ENCODE measurements at regions of chr3 and their contacts with region 1.

Region 1: DNA sequence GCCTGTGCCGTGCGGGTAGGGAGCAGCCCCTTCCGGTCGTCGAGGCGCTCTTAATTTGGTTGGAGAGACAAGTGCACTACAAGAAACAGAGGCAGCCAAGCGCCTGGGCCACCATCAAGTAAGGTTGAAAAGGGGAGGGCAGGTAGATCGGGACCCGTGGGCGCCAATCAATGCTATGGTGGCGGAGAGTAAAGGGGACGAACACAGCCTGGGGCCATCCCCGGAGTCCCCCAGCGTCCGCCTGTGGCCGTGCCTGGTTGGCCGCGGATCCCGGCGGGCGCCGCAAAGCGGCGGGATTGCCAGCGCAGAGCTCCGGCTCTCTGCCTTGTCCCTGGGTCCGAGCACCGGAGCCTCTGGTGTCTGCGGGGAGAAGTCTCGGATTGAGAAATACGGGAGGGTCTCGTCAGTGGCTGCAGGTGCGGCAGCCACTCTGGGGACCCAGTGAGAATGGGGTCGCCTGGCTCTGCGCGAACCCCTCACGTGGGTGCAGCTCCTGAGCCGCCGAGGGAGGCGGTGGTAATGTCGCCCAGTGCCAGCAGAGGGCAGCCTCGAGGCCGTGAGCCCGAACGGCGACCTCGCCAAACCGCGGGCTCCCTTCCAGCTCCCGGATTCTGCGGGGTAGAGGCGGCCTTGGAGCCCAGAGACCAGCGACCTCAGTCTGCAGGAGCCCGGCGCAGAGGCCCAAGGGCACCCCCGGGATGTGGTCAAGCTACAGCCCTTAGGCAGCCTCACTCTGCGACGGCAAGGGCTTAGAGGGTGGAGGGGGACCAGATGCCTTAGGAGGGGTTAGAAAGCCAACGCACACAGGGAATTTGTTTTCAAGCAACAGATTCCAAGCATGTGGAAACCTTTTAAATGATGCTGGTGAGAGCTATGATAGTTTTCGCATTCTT is 10.8 kb downstream of the FOXL2 start:
- DNase-seq: no peak
- H3K4me3 ChIP-seq: peak overlapping the region; percentile 44 to 55 (median 44)
- H3K27ac ChIP-seq: no peak overlapping the region
- H3K4me1 ChIP-seq: peaks cover 40 to 47% (median 45%) of the 10 kb centered on the region in 4 donors
- H3K27me3 ChIP-seq: peaks cover 17 to 68% (median 56%) of the 10 kb centered on the region in 4 donors
- CTCF ChIP-seq: peak; percentile 75 to 98 (median 90)
- EP300 ChIP-seq: no peak
- POLR2A ChIP-seq: no peak

Region 2: GRCh38 chr3:138975351-138975750 is 39.3 kb after region 1 on chr3:
- intact Hi-C with region 1: loop called (anchors 5 kb)
- DNase-seq: no peak
- H3K4me3 ChIP-seq: no peak overlapping the region
- H3K27ac ChIP-seq: no peak overlapping the region
- H3K4me1 ChIP-seq: peaks cover 0 to 6% (median 5%) of the 10 kb centered on the region in 4 donors
- H3K27me3 ChIP-seq: peaks cover 0 to 16% (median 0%) of the 10 kb centered on the region in 4 donors
- CTCF ChIP-seq: no peak
- EP300 ChIP-seq: no peak
- POLR2A ChIP-seq: no peak

Region 3: GRCh38 chr3:139329345-139329850 is 393.3 kb after region 1 on chr3:
- intact Hi-C with region 1: loop called (anchors 2 kb)
- DNase-seq: no peak
- H3K4me3 ChIP-seq: peak overlapping the region in 3 of 4 donors; percentile 10 to 25 (median 24)
- H3K27ac ChIP-seq: no peak overlapping the region
- H3K4me1 ChIP-seq: peaks cover 0 to 8% (median 7%) of the 10 kb centered on the region in 4 donors
- H3K27me3 ChIP-seq: peaks cover 0 to 38% (median 0%) of the 10 kb centered on the region in 4 donors
- CTCF ChIP-seq: peak; percentile 90 to 98 (median 98)
- EP300 ChIP-seq: no peak
- POLR2A ChIP-seq: no peak

Measured in esophagus muscularis mucosa (tissue), 4 donors.